ENCODE measurements at regions of chrX and their contacts with region 1.

Region 1: DNA sequence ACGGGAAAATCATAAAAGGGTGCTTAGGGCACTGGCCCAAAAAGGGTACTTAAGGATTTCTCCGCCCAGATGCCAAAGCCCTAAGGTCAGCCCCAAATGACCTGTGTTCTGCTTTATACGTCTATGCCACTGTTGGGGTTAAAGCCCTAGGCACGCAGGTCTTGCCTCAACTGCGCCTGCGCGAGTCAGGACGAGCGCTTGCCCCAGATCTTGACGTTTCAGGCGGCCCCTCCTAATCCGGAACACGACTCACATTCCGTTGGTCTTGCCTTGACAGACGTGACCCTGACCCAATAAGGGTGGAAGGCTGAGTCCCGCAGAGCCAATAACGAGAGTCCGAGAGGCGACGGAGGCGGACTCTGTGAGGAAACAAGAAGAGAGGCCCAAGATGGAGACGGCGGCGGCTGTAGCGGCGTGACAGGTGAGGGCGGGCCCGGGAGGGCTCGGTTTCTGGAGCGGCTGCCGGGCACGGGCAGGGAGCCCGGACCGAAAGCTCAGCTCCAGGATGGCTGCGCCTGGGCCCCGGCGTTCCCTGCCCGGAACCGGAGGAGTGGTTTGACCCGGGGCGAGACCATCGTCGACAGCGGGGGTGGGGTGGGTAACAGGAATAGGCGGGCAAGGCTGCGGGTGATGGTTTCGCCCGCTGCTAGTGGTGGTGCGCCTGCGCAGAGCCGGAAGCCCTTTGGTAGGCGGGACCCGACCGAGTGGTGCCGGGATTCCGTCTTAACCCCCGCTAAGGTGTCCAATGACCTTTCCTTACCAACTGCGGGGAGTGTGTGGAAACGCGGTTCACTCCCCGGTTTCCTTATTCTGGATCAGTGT is at the start of gene ARAF:
- DNase-seq: peak; percentile 99
- H3K4me3 Mint-ChIP-seq: peak within 1 kb of the TSS; percentile 96
- H3K27ac Mint-ChIP-seq: peak within 1 kb of the TSS; percentile 99
- H3K4me1 Mint-ChIP-seq: peaks cover 18% of the 10 kb centered on the region
- H3K27me3 Mint-ChIP-seq: no peaks in the 10 kb centered on the region
- CTCF ChIP-seq: no peak
- total RNA-seq, gene ARAF: 53.2 and 63.5 TPM in 2 replicates

Region 2: DNA sequence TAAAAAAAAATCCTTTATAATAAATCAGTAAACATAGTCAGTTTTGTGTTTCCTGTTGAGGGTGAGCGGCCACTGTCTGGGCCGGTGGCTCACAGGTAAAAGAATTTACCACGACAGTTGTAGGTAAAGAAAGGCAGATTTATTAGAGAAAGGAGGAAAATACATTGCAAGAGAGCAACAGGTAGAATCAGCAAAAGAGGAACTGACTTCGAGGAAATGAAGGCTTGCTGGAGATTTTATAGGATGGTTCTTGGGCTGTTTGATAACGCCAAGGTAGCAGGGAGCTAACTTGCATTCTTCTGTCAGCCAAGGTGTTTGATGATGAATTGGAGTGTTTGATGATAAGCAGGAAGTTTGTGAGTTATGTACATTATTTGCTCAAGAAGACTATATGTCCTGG is 187.8 kb before region 1 on chrX:
- CTCF ChIA-PET with region 1: no interaction called
- POLR2A ChIA-PET with region 1: no interaction called
- intact Hi-C with region 1: no loop called
- DNase-seq: no peak
- H3K4me3 Mint-ChIP-seq: no peak overlapping the region
- H3K27ac Mint-ChIP-seq: no peak overlapping the region
- H3K4me1 Mint-ChIP-seq: no peaks in the 10 kb centered on the region
- H3K27me3 Mint-ChIP-seq: no peaks in the 10 kb centered on the region
- CTCF ChIP-seq: no peak

Region 3: DNA sequence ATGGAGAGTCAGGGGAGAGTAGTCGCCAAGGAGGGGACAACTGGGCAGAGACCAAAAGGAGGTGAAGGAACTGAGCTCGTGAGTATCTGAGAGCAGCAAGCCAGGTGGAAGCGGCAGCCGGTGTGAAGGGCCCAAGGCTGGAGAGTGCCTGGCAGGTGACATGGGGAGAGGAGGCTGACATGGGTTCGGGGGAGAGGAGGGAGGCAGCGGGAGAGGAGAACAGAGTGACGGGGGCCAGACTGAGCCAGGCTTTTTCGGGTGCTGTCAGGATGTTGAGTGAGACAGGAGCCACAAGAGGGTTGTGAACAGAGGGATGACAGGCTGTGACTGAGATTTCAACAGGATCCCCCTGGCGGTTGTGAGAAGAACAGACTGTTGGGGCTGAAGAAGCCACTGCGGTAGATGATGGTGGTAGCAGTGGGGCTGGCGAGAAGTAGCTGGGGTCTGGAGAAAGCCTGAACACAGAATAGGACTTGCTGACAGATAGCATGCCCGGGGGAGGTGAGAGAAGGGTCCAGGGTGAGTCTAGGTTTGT is 83.6 kb after region 1 on chrX:
- CTCF ChIA-PET with region 1: interaction called, 4 read pairs
- POLR2A ChIA-PET with region 1: no interaction called
- intact Hi-C with region 1: loop called (anchors 2 kb)
- DNase-seq: peak; percentile 23
- H3K4me3 Mint-ChIP-seq: no peak overlapping the region
- H3K27ac Mint-ChIP-seq: no peak overlapping the region
- H3K4me1 Mint-ChIP-seq: peaks cover 11% of the 10 kb centered on the region
- H3K27me3 Mint-ChIP-seq: no peaks in the 10 kb centered on the region
- CTCF ChIP-seq: peak; percentile 34

Region 4: DNA sequence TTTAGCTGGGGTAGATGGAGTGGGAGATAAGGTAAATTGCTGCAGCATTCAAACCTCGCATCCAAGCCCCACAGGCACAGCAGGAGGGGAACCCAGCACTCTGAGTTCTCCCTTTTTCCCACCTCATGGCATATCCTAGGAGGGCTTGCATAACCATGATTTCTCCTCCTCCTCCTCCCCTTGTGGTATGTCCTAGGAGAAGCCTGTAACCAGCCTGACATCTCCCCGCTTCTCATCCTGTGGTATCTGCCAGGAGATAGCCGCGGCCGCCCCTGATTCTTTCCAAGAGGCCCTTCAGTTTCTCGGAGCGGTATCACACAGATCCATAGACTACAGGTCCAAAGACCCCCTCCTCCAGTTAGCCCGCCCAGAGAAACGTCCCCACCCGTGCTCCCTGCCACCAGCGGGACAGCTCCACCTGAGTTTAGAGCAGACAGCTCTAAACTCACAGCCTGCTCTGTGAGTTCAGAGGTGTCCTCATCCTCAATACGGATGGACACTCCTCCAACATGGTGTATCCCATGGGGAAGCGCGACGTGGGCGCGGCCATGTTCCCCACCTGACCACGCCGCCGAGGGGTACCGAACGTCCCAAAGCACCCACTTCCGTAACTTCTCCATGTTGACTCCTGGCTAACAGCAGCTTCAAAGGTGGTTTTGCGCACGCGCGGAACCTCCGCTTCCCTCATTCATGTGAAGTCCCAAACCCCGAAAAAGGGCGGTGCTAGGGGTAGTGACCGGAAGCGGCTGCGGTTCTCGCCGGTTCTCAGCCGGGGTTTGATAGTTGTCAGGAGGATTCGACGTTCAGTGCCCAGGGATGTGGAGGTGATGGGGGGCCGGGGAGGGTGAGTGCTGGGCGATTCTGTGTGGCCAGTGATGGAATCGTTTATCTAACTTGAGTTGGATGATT is 275.4 kb after region 1 on chrX and contains the start of gene ZNF81:
- CTCF ChIA-PET with region 1: no interaction called
- POLR2A ChIA-PET with region 1: interaction called, 3 read pairs
- intact Hi-C with region 1: loop called (anchors 2 kb)
- DNase-seq: peak; percentile 95
- H3K4me3 Mint-ChIP-seq: peak within 1 kb of the TSS; percentile 100
- H3K27ac Mint-ChIP-seq: peak within 1 kb of the TSS; percentile 97
- H3K4me1 Mint-ChIP-seq: peaks cover 5% of the 10 kb centered on the region
- H3K27me3 Mint-ChIP-seq: no peaks in the 10 kb centered on the region
- CTCF ChIP-seq: no peak
- total RNA-seq, gene ZNF81: 7.5 and 7.8 TPM in 2 replicates

Region 5: DNA sequence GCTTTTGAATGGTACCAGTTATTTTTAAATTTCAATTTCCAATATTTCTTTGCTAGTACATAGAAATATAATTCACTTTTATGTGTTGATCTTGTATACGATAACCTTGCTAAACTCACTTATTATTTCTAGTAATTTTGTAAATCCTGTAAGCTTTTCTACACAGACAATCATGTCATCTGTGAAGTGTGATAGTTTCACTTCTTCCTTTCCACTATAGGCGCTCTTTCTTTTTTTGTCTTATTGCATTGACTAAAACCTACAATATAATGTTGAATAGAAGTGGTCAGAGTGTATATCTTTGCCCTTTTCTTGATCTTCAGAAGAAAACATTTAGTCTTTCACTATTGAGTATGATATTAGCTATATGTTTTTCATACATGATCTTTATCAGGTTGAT is 366.2 kb after region 1 on chrX:
- CTCF ChIA-PET with region 1: no interaction called
- POLR2A ChIA-PET with region 1: no interaction called
- intact Hi-C with region 1: no loop called
- DNase-seq: no peak
- H3K4me3 Mint-ChIP-seq: no peak overlapping the region
- H3K27ac Mint-ChIP-seq: no peak overlapping the region
- H3K4me1 Mint-ChIP-seq: no peaks in the 10 kb centered on the region
- H3K27me3 Mint-ChIP-seq: no peaks in the 10 kb centered on the region
- CTCF ChIP-seq: no peak

Measured in MCF 10A (cell line).